Naive thymus-derived CD4-positive, alpha-beta T cell (primary cell): ENCODE measurements at regions of chr10 and their contacts with region 1.

Region 1: GRCh38 chr10:86971232-86971991 is 3.1 kb downstream of the ADIRF start:
- DNase-seq: peak; percentile 85 to 95 (median 90)
- ATAC-seq: peak; percentile 93
- H3K4me3 ChIP-seq: peak overlapping the region; percentile 78
- H3K4me3 Mint-ChIP-seq: peak overlapping the region; percentile 76 to 89 (median 84)
- H3K27ac ChIP-seq: peak overlapping the region; percentile 91
- H3K27ac Mint-ChIP-seq: peak overlapping the region; percentile 78 to 96 (median 92)
- H3K4me1 ChIP-seq: peaks cover 12 to 36% of the 10 kb centered on the region in 2 donors
- H3K4me1 Mint-ChIP-seq: peaks cover 19 to 47% (median 45%) of the 10 kb centered on the region in 7 donors
- H3K27me3 ChIP-seq: no peaks in the 10 kb centered on the region
- H3K27me3 Mint-ChIP-seq: peaks cover 0 to 49% (median 0%) of the 10 kb centered on the region in 5 donors

Region 2: DNA sequence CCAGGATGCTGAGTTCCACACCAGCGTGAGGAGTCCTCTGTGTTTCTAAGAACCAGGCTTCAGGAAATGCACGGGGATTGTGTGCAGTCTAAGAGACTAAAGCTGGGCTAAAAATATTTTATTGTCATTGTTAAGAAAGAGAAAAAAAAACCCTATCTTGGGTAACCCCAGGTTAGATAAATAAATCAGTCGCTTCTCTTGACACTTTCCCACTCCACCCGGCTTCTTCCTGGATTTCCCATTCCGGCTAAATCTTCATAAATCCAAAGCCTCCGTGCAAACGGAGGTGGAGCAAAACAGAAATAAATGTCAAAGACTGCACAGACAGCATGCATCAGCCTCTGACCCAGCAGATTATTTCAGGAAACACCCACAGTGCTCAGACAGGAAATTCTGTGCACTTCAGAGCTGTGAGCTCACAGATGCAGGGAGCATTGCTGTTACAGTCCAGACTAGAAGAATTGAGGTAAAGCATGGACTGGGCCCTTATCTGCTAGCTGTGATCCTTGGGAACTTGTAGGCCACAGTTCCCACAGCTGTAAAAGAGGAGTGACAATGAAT is 560.1 kb before region 1 on chr10:
- CTCF ChIA-PET with region 1: no interaction called
- POLR2A ChIA-PET with region 1: interaction called, 4 read pairs
- intact Hi-C with region 1: loop called in 1 of 2 experiments (anchors 5 kb)
- DNase-seq: peak in 7 of 9 donors; percentile 22 to 38 (median 36)
- ATAC-seq: peak; percentile 70
- H3K4me3 ChIP-seq: peak overlapping the region; percentile 8
- H3K4me3 Mint-ChIP-seq: peak overlapping the region; percentile 62 to 83 (median 77)
- H3K27ac ChIP-seq: peak overlapping the region; percentile 42
- H3K27ac Mint-ChIP-seq: peak overlapping the region; percentile 84 to 94 (median 88)
- H3K4me1 ChIP-seq: peaks cover 20 to 48% of the 10 kb centered on the region in 2 donors
- H3K4me1 Mint-ChIP-seq: peaks cover 24 to 72% (median 57%) of the 10 kb centered on the region in 7 donors
- H3K27me3 ChIP-seq: no peaks in the 10 kb centered on the region
- H3K27me3 Mint-ChIP-seq: peaks cover 0 to 3% (median 0%) of the 10 kb centered on the region in 5 donors

Region 3: DNA sequence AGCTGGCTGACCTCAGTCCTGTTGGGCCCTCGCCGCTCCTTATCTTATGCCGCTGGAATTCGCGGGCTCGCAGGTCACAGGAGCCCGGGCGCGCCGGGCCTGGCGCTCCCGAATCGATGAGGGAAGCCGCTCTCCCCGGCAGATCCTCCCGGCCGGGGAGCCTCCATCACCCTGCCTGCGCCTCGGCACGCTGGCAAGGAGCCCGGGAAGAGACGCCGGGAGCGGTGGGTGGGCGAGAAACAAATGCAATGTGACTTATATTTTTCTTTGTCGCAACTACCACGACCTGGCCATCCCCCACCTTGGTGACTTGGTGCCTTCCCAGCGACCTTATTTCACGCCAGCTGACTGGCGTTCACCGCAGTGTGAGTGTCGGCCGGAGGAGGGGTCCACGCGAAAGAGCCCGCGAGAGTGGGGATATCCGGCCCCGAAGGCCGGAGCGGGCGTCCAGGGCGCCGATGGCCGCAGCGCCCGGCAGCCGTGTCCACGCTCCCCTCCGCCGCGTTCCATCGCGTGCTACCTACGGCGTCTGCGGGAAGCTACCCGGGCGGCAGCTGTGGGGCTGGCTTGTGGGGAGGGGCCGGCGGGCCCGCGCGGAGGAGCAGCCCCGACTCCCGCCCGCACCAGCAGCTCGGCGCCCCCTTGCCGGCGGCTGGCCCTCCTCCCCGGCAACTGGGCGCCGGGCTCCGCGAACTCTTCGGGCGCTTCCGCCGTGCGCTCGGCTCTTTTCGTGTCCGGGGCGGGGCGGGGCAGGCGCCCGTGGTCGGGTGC is 215.5 kb before region 1 on chr10:
- CTCF ChIA-PET with region 1: no interaction called
- POLR2A ChIA-PET with region 1: no interaction called
- intact Hi-C with region 1: loop called in 1 of 2 experiments (anchors 5 kb)
- DNase-seq: peak; percentile 68 to 95 (median 82)
- ATAC-seq: peak; percentile 97
- H3K4me3 ChIP-seq: peak overlapping the region; percentile 73
- H3K4me3 Mint-ChIP-seq: peak overlapping the region; percentile 78 to 95 (median 86)
- H3K27ac ChIP-seq: peak overlapping the region; percentile 50
- H3K27ac Mint-ChIP-seq: peak overlapping the region in 4 of 9 donors; percentile 31 to 71 (median 50)
- H3K4me1 ChIP-seq: peaks cover 9 to 11% of the 10 kb centered on the region in 2 donors
- H3K4me1 Mint-ChIP-seq: peaks cover 13 to 47% (median 36%) of the 10 kb centered on the region in 7 donors
- H3K27me3 ChIP-seq: peaks cover 0 to 6% of the 10 kb centered on the region in 2 donors
- H3K27me3 Mint-ChIP-seq: peaks cover 24 to 52% (median 31%) of the 10 kb centered on the region in 5 donors

Region 4: DNA sequence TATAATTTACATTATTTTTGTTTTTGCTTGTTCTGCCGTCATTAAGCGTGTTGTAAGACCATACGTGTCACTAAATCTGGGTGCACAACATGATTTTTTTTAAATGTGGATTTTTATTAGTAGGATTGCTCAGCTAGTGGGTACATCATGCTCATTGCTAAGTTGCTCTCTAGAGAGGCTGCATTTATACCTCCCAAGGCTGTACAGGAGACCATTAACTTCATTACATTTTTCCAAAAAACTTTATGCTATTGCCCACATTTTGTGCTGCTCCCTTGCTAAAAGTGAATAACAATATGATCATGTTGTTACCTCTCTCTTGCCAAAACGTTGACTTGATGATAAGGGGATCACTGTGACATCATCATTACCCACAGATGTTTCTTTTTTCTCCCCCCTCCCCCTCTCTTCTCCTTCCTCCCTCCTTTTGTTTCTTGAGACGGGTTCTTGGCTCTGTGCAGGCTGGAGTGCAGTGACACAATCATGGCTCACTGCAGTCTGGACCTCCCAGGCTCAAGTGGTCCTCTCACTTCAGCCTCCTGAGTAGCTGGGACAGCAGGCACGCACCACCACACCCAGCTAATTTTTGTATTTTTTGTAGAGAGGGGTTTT is 149.9 kb before region 1 on chr10:
- CTCF ChIA-PET with region 1: no interaction called
- POLR2A ChIA-PET with region 1: no interaction called
- intact Hi-C with region 1: no loop called
- DNase-seq: no peak
- ATAC-seq: no peak
- H3K4me3 ChIP-seq: no peak overlapping the region
- H3K4me3 Mint-ChIP-seq: no peak overlapping the region
- H3K27ac ChIP-seq: no peak overlapping the region
- H3K27ac Mint-ChIP-seq: no peak overlapping the region
- H3K4me1 ChIP-seq: no peaks in the 10 kb centered on the region
- H3K4me1 Mint-ChIP-seq: peaks cover 0 to 5% (median 0%) of the 10 kb centered on the region in 7 donors
- H3K27me3 ChIP-seq: no peaks in the 10 kb centered on the region
- H3K27me3 Mint-ChIP-seq: peaks cover 0 to 4% (median 0%) of the 10 kb centered on the region in 5 donors

Region 5: GRCh38 chr10:86899670-86900276 is 71.6 kb before region 1 on chr10:
- CTCF ChIA-PET with region 1: no interaction called
- POLR2A ChIA-PET with region 1: no interaction called
- intact Hi-C with region 1: no loop called
- DNase-seq: peak in 6 of 9 donors; percentile 10 to 32 (median 26)
- ATAC-seq: peak; percentile 46
- H3K4me3 ChIP-seq: no peak overlapping the region
- H3K4me3 Mint-ChIP-seq: no peak overlapping the region
- H3K27ac ChIP-seq: no peak overlapping the region
- H3K27ac Mint-ChIP-seq: no peak overlapping the region
- H3K4me1 ChIP-seq: no peaks in the 10 kb centered on the region
- H3K4me1 Mint-ChIP-seq: peaks cover 0 to 4% (median 0%) of the 10 kb centered on the region in 7 donors
- H3K27me3 ChIP-seq: no peaks in the 10 kb centered on the region
- H3K27me3 Mint-ChIP-seq: peaks cover 0 to 8% (median 0%) of the 10 kb centered on the region in 5 donors

Region 6: GRCh38 chr10:86945361-86946212 is 25.8 kb before region 1 on chr10:
- CTCF ChIA-PET with region 1: interaction called, 90 read pairs
- POLR2A ChIA-PET with region 1: interaction called, 13 read pairs
- intact Hi-C with region 1: loop called in 1 of 2 experiments (anchors 1 kb)
- DNase-seq: peak in 1 of 9 donors; percentile 10
- ATAC-seq: no peak
- H3K4me3 ChIP-seq: no peak overlapping the region
- H3K4me3 Mint-ChIP-seq: peak overlapping the region in 2 of 10 donors; percentile 20 to 31
- H3K27ac ChIP-seq: no peak overlapping the region
- H3K27ac Mint-ChIP-seq: no peak overlapping the region
- H3K4me1 ChIP-seq: peaks cover 0 to 9% of the 10 kb centered on the region in 2 donors
- H3K4me1 Mint-ChIP-seq: peaks cover 16 to 38% (median 20%) of the 10 kb centered on the region in 7 donors
- H3K27me3 ChIP-seq: no peaks in the 10 kb centered on the region
- H3K27me3 Mint-ChIP-seq: peaks cover 0 to 6% (median 0%) of the 10 kb centered on the region in 5 donors

Region 7: GRCh38 chr10:87058171-87058570 is 86.8 kb after region 1 on chr10:
- CTCF ChIA-PET with region 1: no interaction called
- POLR2A ChIA-PET with region 1: no interaction called
- intact Hi-C with region 1: no loop called
- DNase-seq: no peak
- ATAC-seq: no peak
- H3K4me3 ChIP-seq: no peak overlapping the region
- H3K4me3 Mint-ChIP-seq: no peak overlapping the region
- H3K27ac ChIP-seq: no peak overlapping the region
- H3K27ac Mint-ChIP-seq: no peak overlapping the region
- H3K4me1 ChIP-seq: no peaks in the 10 kb centered on the region
- H3K4me1 Mint-ChIP-seq: no peaks in the 10 kb centered on the region
- H3K27me3 ChIP-seq: no peaks in the 10 kb centered on the region
- H3K27me3 Mint-ChIP-seq: no peaks in the 10 kb centered on the region

Region 8: DNA sequence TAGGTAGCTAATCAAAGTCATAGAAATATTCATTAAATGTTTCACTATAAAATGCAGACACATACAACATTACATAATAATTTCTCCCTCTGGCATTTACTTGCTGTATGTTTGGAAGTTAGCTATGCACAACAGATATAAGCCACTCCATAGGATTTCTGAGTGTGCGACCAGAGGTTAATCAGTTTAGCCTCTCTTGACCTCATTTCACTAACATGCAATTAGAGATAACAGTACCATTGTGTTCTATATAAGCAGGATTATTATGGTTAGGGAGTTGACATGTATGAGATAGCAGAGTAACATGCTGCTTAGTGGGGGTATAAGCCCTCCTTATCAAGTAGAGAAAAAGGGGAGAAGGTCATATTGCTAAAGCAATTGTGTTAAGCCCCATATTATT is 96.9 kb after region 1 on chr10:
- CTCF ChIA-PET with region 1: no interaction called
- POLR2A ChIA-PET with region 1: no interaction called
- intact Hi-C with region 1: no loop called
- DNase-seq: no peak
- ATAC-seq: no peak
- H3K4me3 ChIP-seq: no peak overlapping the region
- H3K4me3 Mint-ChIP-seq: no peak overlapping the region
- H3K27ac ChIP-seq: no peak overlapping the region
- H3K27ac Mint-ChIP-seq: peak overlapping the region in 1 of 9 donors; percentile 21
- H3K4me1 ChIP-seq: no peaks in the 10 kb centered on the region
- H3K4me1 Mint-ChIP-seq: peaks cover 0 to 6% (median 0%) of the 10 kb centered on the region in 7 donors
- H3K27me3 ChIP-seq: no peaks in the 10 kb centered on the region
- H3K27me3 Mint-ChIP-seq: no peaks in the 10 kb centered on the region